ENCODE measurements at regions of chr14 and their contacts with region 1.

Region 1: GRCh38 chr14:73633116-73634010 is 11.4 kb upstream of the DNAL1 start:
- DNase-seq: peak; percentile 52 to 67 (median 57)
- H3K4me3 ChIP-seq: peak overlapping the region; percentile 11 to 57
- H3K4me3 Mint-ChIP-seq: peak overlapping the region; percentile 71 to 84 (median 80)
- H3K27ac ChIP-seq: no peak overlapping the region
- H3K27ac Mint-ChIP-seq: peak overlapping the region in 3 of 7 donors; percentile 6 to 59 (median 49)
- H3K4me1 ChIP-seq: peaks cover 8% of the 10 kb centered on the region
- H3K4me1 Mint-ChIP-seq: peaks cover 3 to 7% (median 4%) of the 10 kb centered on the region in 4 donors
- H3K27me3 ChIP-seq: no peaks in the 10 kb centered on the region
- H3K27me3 Mint-ChIP-seq: peaks cover 5 to 18% of the 10 kb centered on the region in 2 donors

Region 2: DNA sequence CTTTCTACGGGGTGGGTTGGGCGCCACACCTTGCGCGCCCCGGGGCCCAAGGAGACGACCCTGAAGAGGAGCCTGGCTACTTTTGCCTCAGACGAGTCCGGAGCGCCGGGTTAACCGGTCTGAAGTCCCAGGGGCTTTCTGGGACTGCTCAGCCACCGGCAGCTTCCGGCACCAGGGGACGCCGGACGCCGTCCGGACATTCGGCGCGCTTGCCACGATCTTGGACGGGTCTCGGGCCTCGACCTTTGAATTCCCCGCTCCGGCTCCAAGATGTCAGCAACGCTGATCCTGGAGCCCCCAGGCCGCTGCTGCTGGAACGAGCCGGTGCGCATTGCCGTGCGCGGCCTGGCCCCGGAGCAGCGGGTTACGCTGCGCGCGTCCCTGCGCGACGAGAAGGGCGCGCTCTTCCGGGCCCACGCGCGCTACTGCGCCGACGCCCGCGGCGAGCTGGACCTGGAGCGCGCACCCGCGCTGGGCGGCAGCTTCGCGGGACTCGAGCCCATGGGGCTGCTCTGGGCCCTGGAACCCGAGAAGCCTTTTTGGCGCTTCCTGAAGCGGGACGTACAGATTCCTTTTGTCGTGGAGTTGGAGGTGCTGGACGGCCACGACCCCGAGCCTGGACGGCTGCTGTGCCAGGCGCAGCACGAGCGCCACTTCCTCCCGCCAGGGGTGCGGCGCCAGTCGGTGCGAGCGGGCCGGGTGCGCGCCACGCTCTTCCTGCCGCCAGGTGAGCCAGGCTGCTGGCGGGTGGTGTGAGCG is 41.5 kb before region 1 on chr14 and contains the start of gene ACOT4:
- CTCF ChIA-PET with region 1: interaction called, 3 read pairs
- POLR2A ChIA-PET with region 1: interaction called, 3 read pairs
- intact Hi-C with region 1: loop called (anchors 5 kb)
- DNase-seq: peak; percentile 64 to 76 (median 76)
- H3K4me3 ChIP-seq: peak within 1 kb of the TSS; percentile 63 to 77
- H3K4me3 Mint-ChIP-seq: peak within 1 kb of the TSS; percentile 73 to 87 (median 82)
- H3K27ac ChIP-seq: peak within 1 kb of the TSS; percentile 53
- H3K27ac Mint-ChIP-seq: peak within 1 kb of the TSS; percentile 30 to 92 (median 81)
- H3K4me1 ChIP-seq: peaks cover 10% of the 10 kb centered on the region
- H3K4me1 Mint-ChIP-seq: peaks cover 5 to 10% (median 7%) of the 10 kb centered on the region in 4 donors
- H3K27me3 ChIP-seq: no peaks in the 10 kb centered on the region
- H3K27me3 Mint-ChIP-seq: no peaks in the 10 kb centered on the region
- total RNA-seq, gene ACOT4: 1.2 to 1.5 TPM

Measured in CD4-positive, alpha-beta memory T cell (primary cell).